Endothelial cell of umbilical vein (primary cell): ENCODE measurements at regions of chr19 and their contacts with region 1.

Region 1: DNA sequence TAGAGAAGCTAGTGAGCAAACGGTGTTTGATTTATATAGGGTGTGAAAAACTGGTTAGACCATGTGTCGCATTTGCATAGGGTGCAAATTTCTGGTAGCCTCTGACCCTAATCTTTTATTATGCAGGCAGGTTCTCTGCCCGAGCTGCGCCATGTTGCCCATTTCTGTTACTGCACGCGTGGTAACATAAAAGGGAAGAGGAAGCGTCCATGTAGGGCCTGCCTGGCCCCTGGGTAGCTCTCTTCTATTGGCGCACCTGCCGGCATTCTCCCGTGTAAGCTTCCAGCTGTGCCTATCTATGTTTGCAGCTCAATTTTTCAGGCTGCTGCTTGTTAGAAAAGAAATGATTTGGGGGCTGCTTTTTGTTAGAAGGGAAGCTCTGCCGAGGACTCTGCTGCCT is 14.0 kb upstream of the CD70 start:
- DNase-seq: no peak
- H3K4me3 ChIP-seq: no peak overlapping the region
- H3K27ac ChIP-seq: no peak overlapping the region
- H3K4me1 ChIP-seq: no peaks in the 10 kb centered on the region
- H3K27me3 ChIP-seq: no peaks in the 10 kb centered on the region
- CTCF ChIP-seq: no peak
- POLR2A ChIP-seq: no peak

Region 2: DNA sequence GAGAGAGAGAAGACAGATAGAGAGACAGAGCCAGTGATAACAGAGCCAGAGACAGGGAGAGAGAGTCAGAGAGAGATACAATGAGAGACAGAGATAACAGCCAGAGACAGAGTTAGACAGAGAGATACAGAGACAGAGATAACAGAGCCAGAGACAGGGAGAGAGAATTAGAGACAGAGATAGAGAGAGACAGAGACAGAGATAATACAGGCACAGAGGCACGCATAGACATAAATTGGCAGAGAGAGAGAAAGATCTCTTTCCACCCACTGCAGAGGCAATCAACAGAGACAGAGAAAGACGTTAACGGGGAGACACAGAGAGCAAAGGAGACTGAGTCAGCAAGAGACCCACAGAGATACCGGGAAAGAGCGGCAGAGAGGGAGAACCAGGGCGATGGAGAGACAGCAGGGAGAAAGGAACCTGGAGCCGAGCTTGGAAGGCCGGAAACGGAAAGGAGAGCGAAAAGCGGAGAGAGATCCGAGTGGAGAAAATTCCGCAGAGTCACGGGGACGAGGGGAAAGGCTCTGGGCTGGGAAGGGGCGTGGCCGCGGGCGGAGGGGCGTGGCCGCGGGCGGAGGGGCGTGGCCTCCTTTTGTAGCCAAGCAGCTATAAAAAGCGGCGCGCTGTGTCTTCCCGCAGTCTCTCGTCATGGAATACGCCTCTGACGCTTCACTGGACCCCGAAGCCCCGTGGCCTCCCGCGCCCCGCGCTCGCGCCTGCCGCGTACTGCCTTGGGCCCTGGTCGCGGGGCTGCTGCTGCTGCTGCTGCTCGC is 74.3 kb before region 1 on chr19 and contains the start of gene TNFSF9:
- CTCF ChIA-PET with region 1: no interaction called
- POLR2A ChIA-PET with region 1: no interaction called
- dilution Hi-C with region 1: no loop called
- intact Hi-C with region 1: loop called (anchors 2 kb)
- DNase-seq: peak; percentile 86
- H3K4me3 ChIP-seq: peak within 1 kb of the TSS; percentile 42 to 80 (median 74)
- H3K27ac ChIP-seq: peak within 1 kb of the TSS; percentile 60
- H3K4me1 ChIP-seq: peaks cover 4% of the 10 kb centered on the region
- H3K27me3 ChIP-seq: peaks cover 17 to 20% of the 10 kb centered on the region in 2 experiments
- CTCF ChIP-seq: no peak
- POLR2A ChIP-seq: peak; percentile 83
- total RNA-seq, gene TNFSF9: 0.53 and 0.72 TPM in 2 replicates